ENCODE measurements at regions of chr6 and their contacts with region 1.

Region 1: GRCh38 chr6:115592025-115592424 is 468.7 kb downstream of the FRK start:
- DNase-seq: peak in 1 of 2 experiments; percentile 34
- H3K4me3 ChIP-seq: no peak overlapping the region
- H3K27ac ChIP-seq: no peak overlapping the region
- H3K4me1 ChIP-seq: no peaks in the 10 kb centered on the region
- H3K27me3 ChIP-seq: no peaks in the 10 kb centered on the region
- CTCF ChIP-seq: no peak

Region 2: DNA sequence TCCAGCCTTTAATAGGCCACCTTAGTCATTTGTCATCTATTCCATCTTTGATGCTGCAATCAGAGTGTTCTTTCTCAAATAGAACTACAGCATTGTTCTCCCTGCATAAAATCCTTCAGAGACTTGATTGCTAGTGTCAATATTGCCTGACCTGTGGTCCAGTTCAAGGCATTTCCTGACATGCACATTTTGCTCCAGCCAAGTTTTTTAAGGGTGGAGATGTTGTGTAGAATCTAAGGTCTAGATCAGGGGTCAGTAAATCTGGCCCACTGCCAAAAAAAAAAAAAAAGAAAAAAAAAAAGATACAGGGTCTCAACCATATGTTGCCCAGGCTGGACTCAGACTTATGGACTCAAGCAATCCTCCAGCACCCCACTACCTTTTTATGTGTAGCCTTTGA is 114.3 kb after region 1 on chr6:
- CTCF ChIA-PET with region 1: no interaction called
- POLR2A ChIA-PET with region 1: no interaction called
- intact Hi-C with region 1: no loop called
- DNase-seq: peak in 1 of 2 experiments; percentile 58
- H3K4me3 ChIP-seq: no peak overlapping the region
- H3K27ac ChIP-seq: no peak overlapping the region
- H3K4me1 ChIP-seq: no peaks in the 10 kb centered on the region
- H3K27me3 ChIP-seq: no peaks in the 10 kb centered on the region
- CTCF ChIP-seq: no peak

Region 3: GRCh38 chr6:115885636-115886366 is 293.8 kb after region 1 on chr6:
- CTCF ChIA-PET with region 1: no interaction called
- POLR2A ChIA-PET with region 1: interaction called, 12 read pairs
- intact Hi-C with region 1: no loop called
- DNase-seq: no peak
- H3K4me3 ChIP-seq: no peak overlapping the region
- H3K27ac ChIP-seq: no peak overlapping the region
- H3K4me1 ChIP-seq: peaks cover 29% of the 10 kb centered on the region
- H3K27me3 ChIP-seq: no peaks in the 10 kb centered on the region
- CTCF ChIP-seq: no peak